ENCODE measurements at regions of chr19 and their contacts with region 1.

Region 1: DNA sequence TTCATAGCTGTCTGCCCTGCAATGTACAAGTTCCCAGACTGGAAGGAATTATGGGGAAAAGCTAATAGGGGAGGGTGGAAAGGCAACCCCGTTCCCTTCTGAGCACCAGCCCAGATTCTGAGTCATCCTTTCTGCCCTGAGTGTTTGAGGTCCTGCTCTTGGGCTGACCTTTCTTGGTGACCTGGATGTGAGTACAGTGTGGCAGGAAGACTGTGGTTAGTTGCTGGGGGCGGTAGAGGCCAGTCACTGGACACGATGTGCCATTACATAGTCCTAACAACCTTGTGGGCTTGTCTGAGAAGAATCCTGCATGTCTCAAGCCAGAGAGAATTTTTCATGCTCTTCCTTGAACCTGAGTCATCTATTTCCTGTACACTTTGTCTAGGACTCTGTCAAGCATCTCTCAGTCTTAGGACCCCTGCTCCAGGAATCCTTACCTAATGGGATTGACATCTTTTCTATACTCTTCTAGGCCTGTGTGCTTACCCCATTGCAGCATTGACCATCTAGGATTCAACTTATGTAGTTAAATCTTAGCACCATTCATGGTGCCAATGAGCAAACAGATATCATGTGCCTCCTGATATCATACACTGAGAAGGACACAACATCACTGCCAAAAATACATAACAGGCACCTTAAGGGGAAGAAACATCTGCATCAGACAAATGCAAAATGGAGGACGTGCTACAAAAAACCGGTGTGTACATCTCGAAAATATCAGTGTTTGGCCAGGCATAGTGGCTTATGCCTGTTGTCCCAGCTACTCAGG is 8.1 kb upstream of the ANGPTL4 start:
- DNase-seq: no peak
- ATAC-seq: peak; percentile 35; the same call in 2 of the 3 replicates
- H3K4me3 ChIP-seq: no peak overlapping the region
- H3K27ac ChIP-seq: no peak overlapping the region
- H3K4me1 ChIP-seq: no peaks in the 10 kb centered on the region
- H3K27me3 ChIP-seq: no peaks in the 10 kb centered on the region
- CTCF ChIP-seq: no peak
- EP300 ChIP-seq: no peak
- POLR2A ChIP-seq: no peak
- RAD21 ChIP-seq: no peak

Region 2: DNA sequence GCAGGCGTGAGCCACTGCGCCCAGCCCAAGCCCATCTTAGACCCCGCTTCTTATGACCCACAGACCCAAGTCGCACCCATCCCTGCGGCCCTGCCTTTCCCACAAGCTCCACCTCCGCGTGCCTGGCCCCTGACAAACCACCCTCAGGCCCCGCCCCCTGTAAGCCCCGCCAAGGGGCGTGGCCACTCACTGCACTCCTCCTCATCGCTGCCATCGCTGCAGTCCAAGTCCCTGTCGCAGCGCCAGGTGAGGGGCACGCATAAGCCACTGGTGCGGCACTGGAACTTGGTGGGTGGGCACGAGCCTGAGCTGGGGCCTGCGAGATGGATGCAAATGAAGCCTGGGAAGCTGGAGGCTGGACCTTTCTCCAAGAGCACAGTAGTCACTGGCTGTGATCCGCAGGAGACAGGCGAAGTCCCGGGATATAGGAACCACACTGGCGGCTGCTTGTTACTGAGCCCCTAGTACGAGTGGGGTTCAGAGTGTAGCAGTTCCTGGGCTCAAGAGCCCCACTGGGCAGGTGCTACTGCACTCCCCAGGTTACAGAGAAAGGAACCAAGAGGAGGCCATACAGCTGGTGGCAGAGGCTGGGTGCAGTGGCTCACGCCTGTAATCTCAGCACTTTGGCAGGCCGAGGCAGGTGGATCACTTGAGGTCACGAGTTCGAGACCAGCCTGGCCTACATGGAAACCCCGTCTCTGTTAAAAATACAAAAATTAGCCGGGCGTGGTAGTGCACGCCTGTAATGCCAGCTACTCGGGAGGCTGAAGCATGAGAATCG is 50.8 kb before region 1 on chr19:
- CTCF ChIA-PET with region 1: no interaction called
- POLR2A ChIA-PET with region 1: no interaction called
- RAD21 ChIA-PET with region 1: no interaction called
- SMC1A ChIA-PET with region 1: no interaction called
- in situ Hi-C with region 1: no loop called
- intact Hi-C with region 1: no loop called
- DNase-seq: no peak
- ATAC-seq: no peak
- H3K4me3 ChIP-seq: no peak overlapping the region
- H3K27ac ChIP-seq: no peak overlapping the region
- H3K4me1 ChIP-seq: peaks cover 7% of the 10 kb centered on the region
- H3K27me3 ChIP-seq: no peaks in the 10 kb centered on the region
- CTCF ChIP-seq: no peak
- EP300 ChIP-seq: no peak
- POLR2A ChIP-seq: no peak
- RAD21 ChIP-seq: no peak

Region 3: GRCh38 chr19:8389891-8390616 is 34.2 kb after region 1 on chr19 and contains the start of gene RAB11B:
- CTCF ChIA-PET with region 1: interaction called, 14 read pairs
- POLR2A ChIA-PET with region 1: interaction called, 3 read pairs
- RAD21 ChIA-PET with region 1: interaction called, 5 read pairs
- SMC1A ChIA-PET with region 1: interaction called, 3 read pairs
- in situ Hi-C with region 1: no loop called
- intact Hi-C with region 1: no loop called
- DNase-seq: peak; percentile 100
- ATAC-seq: peak; percentile 97
- H3K4me3 ChIP-seq: peak within 1 kb of the TSS; percentile 74
- H3K27ac ChIP-seq: peak within 1 kb of the TSS; percentile 98
- H3K4me1 ChIP-seq: peaks cover 11% of the 10 kb centered on the region
- H3K27me3 ChIP-seq: no peaks in the 10 kb centered on the region
- CTCF ChIP-seq: no peak
- EP300 ChIP-seq: 0 out of 4 replicates have a peak, but pooled peaks of 1 of the 2 experiments have one; percentile 53
- POLR2A ChIP-seq: peak; percentile 81
- RAD21 ChIP-seq: no peak
- polyA plus RNA-seq, gene RAB11B: 0.92 to 2.6 TPM

Region 4: DNA sequence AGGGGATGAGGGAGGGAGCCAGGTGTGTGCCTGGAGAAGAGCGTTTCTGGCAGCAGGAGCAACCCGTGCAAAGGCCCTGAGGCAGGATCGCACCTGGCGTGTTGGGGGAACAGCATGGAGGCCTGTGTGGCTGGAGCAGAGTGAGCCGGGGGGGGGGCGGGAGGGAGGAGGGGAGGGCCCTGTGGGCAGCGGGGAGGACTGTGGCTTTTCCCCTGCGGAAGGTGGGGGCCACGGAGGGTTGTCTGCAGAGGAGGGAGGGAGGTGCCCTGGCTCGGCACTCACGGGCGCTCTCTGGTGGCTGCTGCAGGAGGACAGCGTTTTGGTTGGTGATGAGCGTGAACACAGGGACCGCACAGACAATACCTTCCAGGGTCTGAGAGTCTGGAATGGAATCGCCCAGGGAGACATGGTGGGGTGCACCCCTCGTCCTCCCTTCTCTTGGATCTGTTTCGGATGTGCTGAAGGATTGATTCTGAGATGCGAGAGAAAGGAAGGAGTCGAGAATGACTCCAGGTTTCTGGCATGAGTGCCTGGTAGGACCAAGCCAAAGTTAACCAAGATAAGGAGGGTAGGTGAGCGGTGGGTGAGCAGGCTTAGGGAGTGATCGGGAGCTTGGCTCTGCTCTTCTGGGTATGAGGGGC is 40.9 kb after region 1 on chr19:
- CTCF ChIA-PET with region 1: interaction called, 18 read pairs
- POLR2A ChIA-PET with region 1: no interaction called
- RAD21 ChIA-PET with region 1: no interaction called
- SMC1A ChIA-PET with region 1: interaction called, 3 read pairs
- in situ Hi-C with region 1: no loop called
- intact Hi-C with region 1: loop called (anchors 1 kb)
- DNase-seq: peak; percentile 55
- ATAC-seq: peak; percentile 98
- H3K4me3 ChIP-seq: no peak overlapping the region
- H3K27ac ChIP-seq: no peak overlapping the region
- H3K4me1 ChIP-seq: peaks cover 8% of the 10 kb centered on the region; the same call in 1 of the 2 replicates
- H3K27me3 ChIP-seq: no peaks in the 10 kb centered on the region
- CTCF ChIP-seq: peak; percentile 66 to 88 (median 88)
- EP300 ChIP-seq: no peak
- POLR2A ChIP-seq: no peak; the same call in 1 of the 2 replicates
- RAD21 ChIP-seq: peak; percentile 59